ENCODE measurements at regions of chr12 and their contacts with region 1.

Region 1: GRCh38 chr12:118372541-118373495 is at the start of gene TAOK3:
- DNase-seq: peak; percentile 84
- H3K4me3 ChIP-seq: peak within 1 kb of the TSS; percentile 93
- H3K27me3 ChIP-seq: no peaks in the 10 kb centered on the region
- CTCF ChIP-seq: no peak
- polyA plus RNA-seq, gene TAOK3: 18.3 and 23.5 TPM in 2 replicates

Region 2: DNA sequence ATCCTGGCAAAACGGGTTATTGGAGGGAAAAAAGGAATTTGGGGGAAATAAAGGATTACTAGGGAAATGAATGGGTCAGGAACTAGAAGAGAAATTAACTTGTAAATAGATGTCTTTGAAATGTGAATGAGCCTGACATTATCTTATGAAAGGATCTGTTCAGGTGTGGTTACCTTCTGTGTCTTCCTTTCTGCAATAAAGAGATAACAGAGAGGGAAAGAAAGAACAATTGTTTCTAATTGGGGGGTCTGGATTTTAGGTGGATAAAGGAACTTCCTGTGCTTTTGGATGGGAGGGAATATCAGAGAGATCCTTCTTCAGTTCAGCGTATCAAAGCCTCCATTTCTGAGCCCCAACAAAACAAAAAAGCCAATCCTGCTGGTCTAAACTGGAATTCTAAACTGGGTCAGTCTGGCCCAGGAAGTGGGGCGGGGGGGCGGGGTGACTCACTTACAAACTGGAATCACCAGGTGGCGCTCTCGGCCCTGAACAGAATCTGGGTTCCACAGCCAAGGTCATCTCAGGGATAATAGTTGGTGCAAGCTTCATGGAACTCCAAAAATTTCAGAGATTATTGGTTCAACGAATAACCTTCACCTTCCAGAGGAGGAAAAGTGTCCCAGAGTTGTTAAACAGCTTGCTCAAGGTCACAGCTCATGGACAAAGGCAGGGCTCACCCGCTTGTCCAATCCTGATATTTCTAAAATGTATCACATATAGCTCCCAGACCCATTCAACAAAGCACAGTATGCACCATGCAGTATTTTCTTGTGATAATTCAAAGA is 252.0 kb before region 1 on chr12:
- CTCF ChIA-PET with region 1: interaction called, 16 read pairs
- POLR2A ChIA-PET with region 1: interaction called, 5 read pairs
- DNase-seq: no peak
- H3K4me3 ChIP-seq: no peak overlapping the region
- H3K27me3 ChIP-seq: no peaks in the 10 kb centered on the region
- CTCF ChIP-seq: peak; percentile 82

Region 3: DNA sequence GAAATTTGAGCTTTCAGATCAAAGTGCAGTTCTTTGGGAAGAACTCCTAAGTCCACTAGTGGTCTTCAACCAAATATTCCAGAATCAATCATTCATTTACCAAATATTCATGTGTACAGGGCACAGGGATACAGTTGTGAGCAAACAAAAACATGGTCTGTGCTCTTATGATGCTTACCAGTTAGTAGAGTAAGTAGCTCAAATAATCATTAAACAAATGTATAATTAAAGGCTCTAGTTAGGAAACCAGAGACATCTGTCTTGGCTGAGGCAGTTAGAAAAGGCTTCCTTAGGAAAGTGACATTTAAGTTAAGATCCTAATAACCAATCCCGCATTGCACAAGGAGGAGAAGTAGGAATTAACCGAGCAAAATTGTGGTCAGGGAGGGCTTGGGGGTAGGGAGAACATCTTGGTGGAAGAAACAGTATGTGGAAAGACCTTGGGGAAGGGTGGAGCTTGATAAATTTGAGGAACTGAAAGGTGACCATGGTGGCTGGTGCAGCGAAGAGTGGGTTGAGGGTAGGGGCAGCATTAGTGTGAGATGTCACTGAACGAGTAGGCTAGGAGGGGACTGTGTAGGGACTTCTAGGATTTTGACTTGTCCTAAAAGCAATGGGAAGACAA is 196.9 kb before region 1 on chr12:
- CTCF ChIA-PET with region 1: interaction called, 226 read pairs
- POLR2A ChIA-PET with region 1: no interaction called
- DNase-seq: no peak
- H3K4me3 ChIP-seq: no peak overlapping the region
- H3K27me3 ChIP-seq: no peaks in the 10 kb centered on the region
- CTCF ChIP-seq: no peak

Region 4: GRCh38 chr12:118212606-118213005 is 160.2 kb before region 1 on chr12:
- CTCF ChIA-PET with region 1: interaction called, 10 read pairs
- POLR2A ChIA-PET with region 1: no interaction called
- DNase-seq: no peak
- H3K4me3 ChIP-seq: no peak overlapping the region
- H3K27me3 ChIP-seq: no peaks in the 10 kb centered on the region
- CTCF ChIP-seq: no peak

Region 5: GRCh38 chr12:118307069-118307954 is 65.5 kb before region 1 on chr12:
- CTCF ChIA-PET with region 1: interaction called, 10 read pairs
- POLR2A ChIA-PET with region 1: interaction called, 3 read pairs
- DNase-seq: peak; percentile 83
- H3K4me3 ChIP-seq: peak overlapping the region; percentile 43
- H3K27me3 ChIP-seq: no peaks in the 10 kb centered on the region
- CTCF ChIP-seq: no peak

Region 6: GRCh38 chr12:118536306-118536906 is 163.6 kb after region 1 on chr12:
- CTCF ChIA-PET with region 1: no interaction called
- POLR2A ChIA-PET with region 1: no interaction called
- DNase-seq: no peak
- H3K4me3 ChIP-seq: no peak overlapping the region
- H3K27me3 ChIP-seq: no peaks in the 10 kb centered on the region
- CTCF ChIP-seq: no peak

Region 7: GRCh38 chr12:119412811-119413794 is 1040.3 kb after region 1 on chr12:
- CTCF ChIA-PET with region 1: interaction called, 10 read pairs
- POLR2A ChIA-PET with region 1: no interaction called
- DNase-seq: peak; percentile 1
- H3K4me3 ChIP-seq: no peak overlapping the region
- H3K27me3 ChIP-seq: no peaks in the 10 kb centered on the region
- CTCF ChIP-seq: peak; percentile 74

Measured in BJ (cell line).